Endothelial cell of umbilical vein (primary cell): ENCODE measurements at regions of chr7 and their contacts with region 1.

Region 1: GRCh38 chr7:12861070-12861469 is 173.6 kb downstream of the ARL4A start:
- DNase-seq: peak; percentile 99
- H3K4me3 ChIP-seq: no peak overlapping the region
- H3K27ac ChIP-seq: peak overlapping the region; percentile 76
- H3K4me1 ChIP-seq: peaks cover 17% of the 10 kb centered on the region
- H3K27me3 ChIP-seq: no peaks in the 10 kb centered on the region
- CTCF ChIP-seq: no peak
- POLR2A ChIP-seq: no peak

Region 2: GRCh38 chr7:11607686-11608085 is 1253.4 kb before region 1 on chr7:
- CTCF ChIA-PET with region 1: no interaction called
- POLR2A ChIA-PET with region 1: no interaction called
- dilution Hi-C with region 1: no loop called
- intact Hi-C with region 1: no loop called
- DNase-seq: peak; percentile 89
- H3K4me3 ChIP-seq: no peak overlapping the region
- H3K27ac ChIP-seq: no peak overlapping the region
- H3K4me1 ChIP-seq: peaks cover 14% of the 10 kb centered on the region
- H3K27me3 ChIP-seq: no peaks in the 10 kb centered on the region
- CTCF ChIP-seq: no peak
- POLR2A ChIP-seq: no peak

Region 3: GRCh38 chr7:12715372-12716133 is 145.5 kb before region 1 on chr7:
- CTCF ChIA-PET with region 1: no interaction called
- POLR2A ChIA-PET with region 1: no interaction called
- dilution Hi-C with region 1: no loop called
- intact Hi-C with region 1: loop called (anchors 1 kb)
- DNase-seq: peak; percentile 96
- H3K4me3 ChIP-seq: peak overlapping the region in 1 of 3 experiments; percentile 1
- H3K27ac ChIP-seq: peak overlapping the region; percentile 58
- H3K4me1 ChIP-seq: peaks cover 39% of the 10 kb centered on the region
- H3K27me3 ChIP-seq: no peaks in the 10 kb centered on the region
- CTCF ChIP-seq: no peak
- POLR2A ChIP-seq: peak; percentile 64

Region 4: GRCh38 chr7:12951397-12951801 is 90.3 kb after region 1 on chr7:
- CTCF ChIA-PET with region 1: no interaction called
- POLR2A ChIA-PET with region 1: no interaction called
- dilution Hi-C with region 1: no loop called
- intact Hi-C with region 1: loop called (anchors 1 kb)
- DNase-seq: peak; percentile 83
- H3K4me3 ChIP-seq: no peak overlapping the region
- H3K27ac ChIP-seq: peak overlapping the region; percentile 24
- H3K4me1 ChIP-seq: peaks cover 11% of the 10 kb centered on the region
- H3K27me3 ChIP-seq: no peaks in the 10 kb centered on the region
- CTCF ChIP-seq: no peak
- POLR2A ChIP-seq: no peak

Region 5: GRCh38 chr7:13028825-13029099 is 167.7 kb after region 1 on chr7:
- CTCF ChIA-PET with region 1: no interaction called
- POLR2A ChIA-PET with region 1: no interaction called
- dilution Hi-C with region 1: no loop called
- intact Hi-C with region 1: loop called (anchors 2 kb)
- DNase-seq: peak; percentile 80
- H3K4me3 ChIP-seq: no peak overlapping the region
- H3K27ac ChIP-seq: peak overlapping the region; percentile 47
- H3K4me1 ChIP-seq: peaks cover 18% of the 10 kb centered on the region
- H3K27me3 ChIP-seq: no peaks in the 10 kb centered on the region
- CTCF ChIP-seq: no peak
- POLR2A ChIP-seq: no peak

Region 6: GRCh38 chr7:13265270-13265669 is 404.2 kb after region 1 on chr7:
- CTCF ChIA-PET with region 1: no interaction called
- POLR2A ChIA-PET with region 1: no interaction called
- dilution Hi-C with region 1: no loop called
- intact Hi-C with region 1: no loop called
- DNase-seq: no peak
- H3K4me3 ChIP-seq: no peak overlapping the region
- H3K27ac ChIP-seq: no peak overlapping the region
- H3K4me1 ChIP-seq: no peaks in the 10 kb centered on the region
- H3K27me3 ChIP-seq: peaks cover 0 to 3% of the 10 kb centered on the region in 2 experiments
- CTCF ChIP-seq: no peak
- POLR2A ChIP-seq: no peak